RWPE1 (cell line): ENCODE measurements at regions of chr19 and their contacts with region 1.

Region 1: GRCh38 chr19:48965040-48965805 is at the start of gene FTL:
- DNase-seq: peak; percentile 94
- H3K27ac ChIP-seq: peak within 1 kb of the TSS; percentile 95
- CTCF ChIP-seq: no peak

Region 2: DNA sequence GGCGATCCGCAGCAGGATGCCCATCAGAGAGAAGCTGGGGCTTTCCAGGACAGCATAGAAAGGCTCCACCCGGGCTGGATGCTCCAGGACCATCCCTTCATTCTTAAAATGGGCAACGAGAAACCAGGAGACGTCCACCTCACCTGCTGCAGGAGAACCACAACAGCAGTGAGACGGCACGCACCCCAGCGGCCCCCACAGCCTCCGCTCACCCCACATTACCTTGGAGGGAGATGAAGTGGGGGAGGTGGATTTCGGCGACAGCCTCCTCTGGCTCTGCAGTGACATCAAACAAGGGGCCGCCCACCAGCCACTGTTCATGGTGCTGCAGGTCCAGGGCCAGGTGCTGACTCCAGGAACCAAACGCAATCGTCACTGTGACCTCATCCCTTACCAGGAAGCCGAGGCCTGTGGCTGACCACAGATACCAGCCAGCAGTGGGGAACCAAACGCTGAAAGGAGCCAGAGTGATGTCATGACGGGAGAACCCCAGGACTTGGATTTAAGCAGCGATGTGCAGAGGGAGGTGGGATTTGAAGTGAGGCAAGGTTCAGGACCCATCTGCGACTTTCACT is 734.6 kb before region 1 on chr19:
- CTCF ChIA-PET with region 1: no interaction called
- POLR2A ChIA-PET with region 1: no interaction called
- DNase-seq: no peak
- H3K27ac ChIP-seq: no peak overlapping the region
- CTCF ChIP-seq: no peak

Region 3: DNA sequence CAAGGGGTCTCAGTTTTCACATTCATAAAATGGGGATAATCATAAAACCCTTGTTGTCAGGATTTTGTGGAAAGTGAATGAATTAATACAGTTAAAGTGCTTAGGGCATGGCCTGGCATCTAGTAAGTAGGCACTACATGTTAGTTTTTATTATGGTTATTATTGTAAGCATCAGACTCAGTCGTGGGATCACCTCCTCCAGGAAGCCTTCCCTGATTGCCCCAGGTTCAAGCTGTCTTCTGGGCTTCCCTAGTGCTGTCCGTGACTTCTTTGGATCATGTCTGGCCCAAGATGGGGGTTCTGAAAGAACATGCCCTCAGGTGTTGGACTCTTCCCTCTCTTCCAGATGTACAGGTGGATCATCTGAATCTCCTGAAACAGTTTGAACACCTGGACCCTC is 54.4 kb before region 1 on chr19:
- CTCF ChIA-PET with region 1: no interaction called
- POLR2A ChIA-PET with region 1: interaction called, 11 read pairs
- DNase-seq: no peak
- H3K27ac ChIP-seq: no peak overlapping the region
- CTCF ChIP-seq: no peak